ENCODE measurements at regions of chr6 and their contacts with region 1.

Region 1: DNA sequence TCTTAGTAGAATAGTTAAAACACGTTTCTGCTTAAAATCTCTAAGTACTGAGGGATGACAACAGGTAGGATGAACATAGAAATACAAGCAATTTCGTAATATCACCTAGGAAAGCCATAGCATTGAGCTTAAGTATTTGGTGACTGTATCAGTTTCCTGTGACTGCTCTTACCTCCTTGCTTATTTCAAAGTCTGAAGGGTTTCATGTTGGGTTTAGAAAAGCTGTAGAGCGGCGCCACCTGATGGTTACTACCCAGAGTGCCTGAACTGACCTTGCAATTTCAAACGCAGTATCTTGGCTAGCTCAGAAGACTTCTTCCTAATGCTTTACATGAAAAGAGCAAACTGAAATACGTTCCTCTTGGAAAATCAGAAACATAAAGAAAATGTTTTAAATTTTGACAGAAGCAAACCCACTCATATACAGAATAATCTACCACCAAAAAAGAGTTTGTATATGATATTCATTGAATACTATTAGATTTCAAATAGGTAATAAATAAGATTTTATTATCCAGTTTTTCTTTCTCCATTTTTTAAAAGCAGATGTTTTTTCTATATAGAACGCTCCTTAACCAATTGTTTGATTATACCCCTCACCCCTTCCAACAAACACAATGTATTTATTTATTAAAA is 82.3 kb upstream of the RIPOR2 start:
- DNase-seq: peak; percentile 80 to 92 (median 88)
- H3K4me3 ChIP-seq: no peak overlapping the region
- H3K27ac ChIP-seq: peak overlapping the region in 1 of 2 experiments; percentile 50
- H3K4me1 ChIP-seq: peaks cover 18 to 47% (median 22%) of the 10 kb centered on the region in 4 experiments
- H3K27me3 ChIP-seq: no peaks in the 10 kb centered on the region

Region 2: DNA sequence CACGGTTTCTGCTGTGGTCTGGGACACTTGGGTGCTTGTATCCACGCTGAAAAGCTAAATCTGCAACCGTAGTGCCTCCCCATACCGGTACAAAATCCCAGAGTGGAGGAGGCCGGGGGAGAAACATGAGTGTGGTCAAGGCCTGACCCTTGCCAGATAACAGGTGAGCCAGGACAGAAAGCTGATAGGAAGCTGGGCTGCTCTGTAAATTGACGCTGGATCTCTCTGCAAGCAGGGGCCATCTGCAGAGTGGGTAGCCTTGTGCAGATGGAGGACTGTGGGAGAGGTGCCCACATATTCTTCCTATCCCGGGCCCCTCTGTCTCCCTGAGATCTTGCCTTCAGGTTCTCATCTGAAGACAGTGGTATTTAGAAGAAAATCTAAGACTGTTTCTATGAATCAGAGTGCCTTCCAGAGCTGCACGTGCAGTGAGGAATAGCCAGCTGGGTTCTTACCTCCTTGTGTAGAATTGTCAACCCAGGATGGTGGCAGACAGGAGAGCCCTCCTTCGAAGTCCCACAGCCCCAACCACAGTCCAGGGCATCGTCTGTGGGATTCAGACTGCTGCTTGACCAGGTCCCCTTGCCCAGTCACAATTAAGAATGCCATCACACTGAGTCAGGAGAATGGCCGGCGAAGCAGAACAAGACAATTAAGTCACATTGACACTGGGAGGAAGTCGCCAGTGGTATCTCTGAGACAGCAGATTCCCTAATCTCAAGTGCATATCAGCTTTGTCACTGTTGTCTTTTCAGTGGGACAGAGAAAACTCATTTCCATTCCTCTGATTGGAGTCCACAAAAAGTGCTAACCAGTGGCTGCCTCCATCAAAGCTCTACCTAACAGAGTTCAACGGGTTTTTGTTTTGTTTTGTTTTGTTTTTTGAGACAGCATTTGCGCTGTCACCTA is 17.7 kb after region 1 on chr6:
- CTCF ChIA-PET with region 1: interaction called, 27 read pairs
- POLR2A ChIA-PET with region 1: no interaction called
- DNase-seq: peak; percentile 68 to 91 (median 84)
- H3K4me3 ChIP-seq: peak overlapping the region in 6 of 7 experiments; percentile 26 to 80 (median 62)
- H3K27ac ChIP-seq: peak overlapping the region; percentile 73 to 85
- H3K4me1 ChIP-seq: peaks cover 41 to 80% (median 60%) of the 10 kb centered on the region in 4 experiments
- H3K27me3 ChIP-seq: no peaks in the 10 kb centered on the region

Region 3: GRCh38 chr6:25070547-25071366 is 52.7 kb after region 1 on chr6:
- CTCF ChIA-PET with region 1: interaction called, 11 read pairs
- POLR2A ChIA-PET with region 1: no interaction called
- DNase-seq: peak; percentile 88 to 94 (median 93)
- H3K4me3 ChIP-seq: peak overlapping the region in 1 of 7 experiments; percentile 42
- H3K27ac ChIP-seq: peak overlapping the region in 1 of 2 experiments; percentile 26
- H3K4me1 ChIP-seq: peaks cover 0 to 7% (median 1%) of the 10 kb centered on the region in 4 experiments
- H3K27me3 ChIP-seq: no peaks in the 10 kb centered on the region

Region 4: DNA sequence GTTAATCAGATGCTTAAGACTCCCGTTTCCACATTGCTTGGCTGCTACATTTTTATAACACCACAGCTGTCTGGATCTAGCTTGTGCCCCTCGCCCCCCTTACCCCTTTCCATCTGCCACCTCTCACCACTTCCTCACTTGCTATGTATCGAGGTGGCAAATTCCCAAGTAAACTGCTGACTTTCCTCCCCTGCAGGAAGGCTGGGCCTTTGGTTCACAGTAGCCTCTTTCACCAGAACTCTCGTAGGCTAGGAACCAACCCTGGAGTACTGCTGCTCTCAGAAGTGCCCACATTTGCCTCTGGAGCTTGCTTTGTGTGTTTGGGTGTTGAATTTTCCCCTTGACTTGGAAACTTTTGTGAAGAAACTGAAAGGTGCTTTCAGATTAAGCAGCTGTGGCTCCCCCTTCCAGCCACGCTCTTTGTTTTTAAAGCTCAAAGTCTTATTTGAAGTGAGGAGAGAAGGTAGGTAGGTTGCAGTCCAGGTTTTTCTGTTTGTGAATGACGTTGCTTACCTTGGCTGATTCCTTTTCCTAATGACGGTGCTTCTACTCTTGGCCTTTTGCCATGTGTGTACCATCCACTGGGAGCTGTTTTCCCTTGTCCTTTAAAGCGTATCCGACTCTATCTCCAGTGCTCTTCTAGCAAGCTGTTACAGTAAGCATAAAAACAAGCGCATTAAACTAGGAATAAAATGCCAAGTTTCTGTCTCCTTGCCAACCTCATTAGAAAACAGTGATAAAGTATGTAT is 351.6 kb after region 1 on chr6:
- CTCF ChIA-PET with region 1: no interaction called
- POLR2A ChIA-PET with region 1: no interaction called
- DNase-seq: peak; percentile 43 to 91 (median 83)
- H3K4me3 ChIP-seq: peak overlapping the region in 4 of 7 experiments; percentile 2 to 44 (median 32)
- H3K27ac ChIP-seq: peak overlapping the region; percentile 43 to 75
- H3K4me1 ChIP-seq: peaks cover 15 to 43% (median 28%) of the 10 kb centered on the region in 4 experiments
- H3K27me3 ChIP-seq: no peaks in the 10 kb centered on the region

Measured in common myeloid progenitor, CD34-positive (primary cell).